ENCODE measurements at regions of chr16 and their contacts with region 1.

Region 1: GRCh38 chr16:3880623-3881498 is at the start of gene CREBBP:
- DNase-seq: peak; percentile 83
- H3K4me3 ChIP-seq: peak within 1 kb of the TSS; percentile 86 to 98
- H3K27ac ChIP-seq: peak within 1 kb of the TSS; percentile 80 to 82
- H3K4me1 ChIP-seq: peaks cover 6% of the 10 kb centered on the region
- H3K27me3 ChIP-seq: no peaks in the 10 kb centered on the region
- CTCF ChIP-seq: peak in 2 of 4 experiments; percentile 22 to 23
- POLR2A ChIP-seq: peak; percentile 65
- total RNA-seq, gene CREBBP: 82.2 to 143 TPM

Region 2: GRCh38 chr16:3525951-3526350 is 354.9 kb before region 1 on chr16:
- intact Hi-C with region 1: loop called (anchors 5 kb)
- DNase-seq: no peak
- H3K4me3 ChIP-seq: no peak overlapping the region
- H3K27ac ChIP-seq: no peak overlapping the region
- H3K4me1 ChIP-seq: no peaks in the 10 kb centered on the region
- H3K27me3 ChIP-seq: no peaks in the 10 kb centered on the region
- CTCF ChIP-seq: no peak
- POLR2A ChIP-seq: no peak

Region 3: DNA sequence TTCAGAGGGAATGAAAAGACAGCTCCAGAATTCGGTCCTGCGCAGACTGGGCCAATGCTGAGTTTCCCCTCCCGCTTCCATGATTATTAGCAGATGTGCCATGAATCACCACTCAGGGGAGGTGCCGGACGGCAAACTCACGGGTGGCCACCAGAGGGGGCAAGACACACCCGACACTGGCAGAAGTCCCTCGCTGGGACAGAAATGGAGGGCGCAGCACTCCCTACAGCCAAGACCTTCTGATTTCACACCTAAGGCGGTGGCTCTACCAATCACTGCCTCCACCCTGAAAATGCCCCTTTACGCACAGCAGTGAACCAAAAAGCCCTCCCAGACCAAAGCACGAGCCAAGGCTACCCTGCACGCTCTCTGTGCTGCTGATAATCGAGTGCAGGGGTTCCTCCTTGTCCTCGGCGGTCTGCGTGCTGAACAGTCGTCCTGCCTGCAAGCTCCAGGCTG is 190.4 kb before region 1 on chr16:
- intact Hi-C with region 1: loop called (anchors 1 kb)
- DNase-seq: peak; percentile 84
- H3K4me3 ChIP-seq: peak overlapping the region; percentile 5 to 19
- H3K27ac ChIP-seq: peak overlapping the region in 1 of 2 donors; percentile 36
- H3K4me1 ChIP-seq: peaks cover 4% of the 10 kb centered on the region
- H3K27me3 ChIP-seq: no peaks in the 10 kb centered on the region
- CTCF ChIP-seq: peak; percentile 81 to 95 (median 92)
- POLR2A ChIP-seq: no peak

Region 4: GRCh38 chr16:3717235-3718018 is 163.4 kb before region 1 on chr16 and contains the start of gene TRAP1:
- intact Hi-C with region 1: loop called (anchors 2 kb)
- DNase-seq: peak; percentile 83
- H3K4me3 ChIP-seq: peak within 1 kb of the TSS; percentile 65 to 89
- H3K27ac ChIP-seq: peak within 1 kb of the TSS; percentile 70 to 80
- H3K4me1 ChIP-seq: peaks cover 8% of the 10 kb centered on the region
- H3K27me3 ChIP-seq: no peaks in the 10 kb centered on the region
- CTCF ChIP-seq: peak in 1 of 4 experiments; percentile 24
- POLR2A ChIP-seq: peak; percentile 57
- total RNA-seq, gene TRAP1: 71.2 to 88.6 TPM

Region 5: GRCh38 chr16:3774156-3774767 is 106.6 kb before region 1 on chr16:
- intact Hi-C with region 1: loop called (anchors 5 kb)
- DNase-seq: no peak
- H3K4me3 ChIP-seq: no peak overlapping the region
- H3K27ac ChIP-seq: no peak overlapping the region
- H3K4me1 ChIP-seq: no peaks in the 10 kb centered on the region
- H3K27me3 ChIP-seq: no peaks in the 10 kb centered on the region
- CTCF ChIP-seq: no peak
- POLR2A ChIP-seq: no peak

Region 6: DNA sequence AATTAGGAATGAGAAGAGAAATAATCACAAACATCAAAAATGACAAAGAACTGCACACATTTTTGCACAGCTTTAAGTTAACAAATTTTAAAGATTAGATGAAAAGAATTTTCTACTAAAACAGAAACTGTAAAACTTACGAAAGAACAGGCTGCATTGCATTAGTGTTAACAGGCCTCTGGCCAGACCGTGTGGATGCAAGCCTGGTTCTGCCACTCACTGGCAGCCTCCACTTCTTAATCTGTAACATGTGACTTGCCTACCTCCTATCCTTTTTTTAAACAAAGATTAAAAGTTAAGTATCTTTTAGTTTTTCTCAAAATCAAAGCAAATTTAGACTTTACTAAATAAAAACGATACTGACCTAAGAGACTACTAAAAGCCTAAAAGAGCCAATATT is 37.9 kb before region 1 on chr16:
- intact Hi-C with region 1: no loop called
- DNase-seq: no peak
- H3K4me3 ChIP-seq: no peak overlapping the region
- H3K27ac ChIP-seq: no peak overlapping the region
- H3K4me1 ChIP-seq: no peaks in the 10 kb centered on the region
- H3K27me3 ChIP-seq: no peaks in the 10 kb centered on the region
- CTCF ChIP-seq: no peak
- POLR2A ChIP-seq: no peak

Measured in prostate gland (tissue), 2 donors.